Activated T-helper 2 cell treated with anti-CD3 and anti-CD28 coated beads, Interferon-gamma antibody, Interleukin-2, Interleukin-4, amounts not matched to agents 10 μg/mL and 5 μg/mL and 100 μg/mL, durations not matched to agents 14 hours and 24 hours and 36 hours (primary cell): ENCODE measurements at regions of chr5 and their contacts with region 1.

Region 1: DNA sequence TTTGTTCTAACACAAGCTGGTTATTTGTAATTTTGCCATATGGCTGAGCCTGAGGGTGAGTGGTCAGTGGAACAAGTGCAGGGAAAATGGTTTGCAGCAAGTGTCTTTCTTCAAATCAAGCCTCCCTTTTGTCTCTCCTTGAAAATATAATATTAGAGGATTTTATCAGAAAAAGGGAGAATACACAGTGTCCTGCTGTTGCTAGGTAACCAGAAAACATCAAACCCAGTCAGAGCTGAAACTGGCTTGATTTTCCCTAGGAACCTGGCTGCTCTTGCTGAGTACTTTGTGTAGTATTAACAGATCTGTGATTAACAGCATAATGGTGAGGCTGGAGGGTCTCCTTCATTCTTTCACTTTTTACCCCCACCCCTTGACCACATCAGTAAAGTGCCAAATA is 314.0 kb downstream of the ARHGEF28 start:
- DNase-seq: no peak
- H3K4me3 Mint-ChIP-seq: no peak overlapping the region
- H3K27ac Mint-ChIP-seq: no peak overlapping the region
- H3K4me1 Mint-ChIP-seq: no peaks in the 10 kb centered on the region
- H3K27me3 Mint-ChIP-seq: peaks cover 3% of the 10 kb centered on the region

Region 2: DNA sequence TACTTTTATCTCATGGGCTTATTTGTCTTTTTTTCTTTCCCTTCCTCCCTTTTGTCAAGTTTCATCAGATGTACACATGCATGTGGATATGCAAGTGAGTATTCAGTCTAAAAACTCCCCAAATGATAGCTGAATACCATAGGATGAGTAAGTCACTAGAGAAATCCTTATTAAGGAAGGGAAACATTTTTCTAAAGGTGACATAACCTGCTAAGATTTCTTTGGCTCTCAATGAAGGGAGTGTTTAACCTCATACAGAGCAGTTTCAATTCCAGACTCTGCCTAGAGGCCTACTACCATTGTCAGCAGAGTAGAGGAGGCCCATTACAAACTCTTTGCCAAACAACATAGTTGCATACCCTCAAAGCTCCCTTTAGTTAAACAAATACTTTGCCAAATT is 121.7 kb before region 1 on chr5:
- intact Hi-C with region 1: loop called (anchors 5 kb)
- DNase-seq: no peak
- H3K4me3 Mint-ChIP-seq: no peak overlapping the region
- H3K27ac Mint-ChIP-seq: no peak overlapping the region
- H3K4me1 Mint-ChIP-seq: no peaks in the 10 kb centered on the region
- H3K27me3 Mint-ChIP-seq: peaks cover 4% of the 10 kb centered on the region

Region 3: GRCh38 chr5:73867345-73868335 is 72.4 kb before region 1 on chr5:
- intact Hi-C with region 1: no loop called
- DNase-seq: no peak
- H3K4me3 Mint-ChIP-seq: no peak overlapping the region
- H3K27ac Mint-ChIP-seq: no peak overlapping the region
- H3K4me1 Mint-ChIP-seq: no peaks in the 10 kb centered on the region
- H3K27me3 Mint-ChIP-seq: peaks cover 12% of the 10 kb centered on the region